Mammary epithelial cell (primary cell): ENCODE measurements at regions of chr2 and their contacts with region 1.

Region 1: GRCh38 chr2:105397964-105398698 is 720 bp downstream of the FHL2 start:
- DNase-seq: no peak
- H3K4me3 ChIP-seq: peak overlapping the region; percentile 96 to 98 (median 96)
- H3K27ac ChIP-seq: peak overlapping the region; percentile 92
- H3K4me1 ChIP-seq: peaks cover 45% of the 10 kb centered on the region
- H3K27me3 ChIP-seq: no peaks in the 10 kb centered on the region
- CTCF ChIP-seq: peak in 1 of 2 donors; percentile 12

Region 2: GRCh38 chr2:105377819-105378218 is 20.3 kb before region 1 on chr2:
- CTCF ChIA-PET with region 1: no interaction called
- dilution Hi-C with region 1: no loop called
- in situ Hi-C with region 1: no loop called
- intact Hi-C with region 1: loop called (anchors 2 kb)
- DNase-seq: no peak
- H3K4me3 ChIP-seq: no peak overlapping the region
- H3K27ac ChIP-seq: no peak overlapping the region
- H3K4me1 ChIP-seq: peaks cover 88% of the 10 kb centered on the region
- H3K27me3 ChIP-seq: no peaks in the 10 kb centered on the region
- CTCF ChIP-seq: no peak

Region 3: GRCh38 chr2:105652014-105652796 is 254.1 kb after region 1 on chr2:
- CTCF ChIA-PET with region 1: interaction called, 13 read pairs
- dilution Hi-C with region 1: no loop called
- in situ Hi-C with region 1: no loop called
- intact Hi-C with region 1: no loop called
- DNase-seq: no peak
- H3K4me3 ChIP-seq: no peak overlapping the region
- H3K27ac ChIP-seq: no peak overlapping the region
- H3K4me1 ChIP-seq: no peaks in the 10 kb centered on the region
- H3K27me3 ChIP-seq: no peaks in the 10 kb centered on the region
- CTCF ChIP-seq: no peak